ENCODE measurements at regions of chr5 and their contacts with region 1.

Region 1: GRCh38 chr5:16784843-16785791 is 151.0 kb downstream of the MYO10 start:
- DNase-seq: no peak
- ATAC-seq: no peak
- H3K4me3 ChIP-seq: no peak overlapping the region
- H3K27ac ChIP-seq: no peak overlapping the region
- H3K4me1 ChIP-seq: peaks cover 0 to 17% (median 7%) of the 10 kb centered on the region in 3 donors
- H3K27me3 ChIP-seq: no peaks in the 10 kb centered on the region
- CTCF ChIP-seq: no peak

Region 2: GRCh38 chr5:16612007-16612406 is 173.1 kb before region 1 on chr5:
- intact Hi-C with region 1: no loop called
- DNase-seq: no peak
- ATAC-seq: no peak
- H3K4me3 ChIP-seq: no peak overlapping the region
- H3K27ac ChIP-seq: no peak overlapping the region
- H3K4me1 ChIP-seq: no peaks in the 10 kb centered on the region
- H3K27me3 ChIP-seq: no peaks in the 10 kb centered on the region
- CTCF ChIP-seq: no peak

Region 3: DNA sequence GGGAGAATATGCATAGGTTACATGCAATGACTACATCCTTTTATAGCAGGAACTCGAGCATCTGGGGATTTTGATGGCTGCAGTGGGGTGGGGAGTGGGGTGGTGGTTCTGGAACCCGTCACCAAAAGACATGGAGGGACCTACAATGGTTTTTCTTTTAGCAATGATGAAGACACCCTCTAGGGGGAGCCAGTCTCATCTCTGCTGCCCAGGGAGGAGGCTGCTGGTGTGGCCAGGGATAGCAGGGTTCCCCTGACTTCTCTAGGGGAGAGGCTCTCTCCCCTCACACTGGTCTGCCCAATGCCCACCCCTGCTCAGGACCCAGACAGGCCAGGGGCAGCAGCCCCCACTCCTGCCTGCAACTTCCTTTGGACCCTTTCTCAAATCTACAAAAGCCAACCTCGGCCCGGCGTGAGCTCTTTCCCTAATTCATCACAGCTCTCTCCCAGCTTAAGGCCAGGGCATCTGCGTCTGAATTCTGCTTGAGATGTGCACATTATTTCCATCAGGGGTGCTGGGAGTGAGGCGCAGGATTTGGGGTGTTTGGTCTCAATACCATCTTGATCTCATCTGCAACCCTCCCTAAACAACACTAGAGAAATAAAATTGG is 94.8 kb before region 1 on chr5:
- intact Hi-C with region 1: loop called in 1 of 3 experiments (anchors 10 kb)
- DNase-seq: peak in 2 of 6 donors; percentile 13 to 38
- ATAC-seq: peak; percentile 55 to 96 (median 86)
- H3K4me3 ChIP-seq: no peak overlapping the region
- H3K27ac ChIP-seq: no peak overlapping the region
- H3K4me1 ChIP-seq: no peaks in the 10 kb centered on the region
- H3K27me3 ChIP-seq: no peaks in the 10 kb centered on the region
- CTCF ChIP-seq: peak; percentile 27 to 60 (median 51)

Region 4: GRCh38 chr5:16736158-16736995 is 48.7 kb before region 1 on chr5:
- intact Hi-C with region 1: no loop called
- DNase-seq: peak in 4 of 6 donors; percentile 56 to 83 (median 68)
- ATAC-seq: peak; percentile 82 to 90 (median 88)
- H3K4me3 ChIP-seq: no peak overlapping the region
- H3K27ac ChIP-seq: peak overlapping the region; percentile 18 to 74 (median 69)
- H3K4me1 ChIP-seq: peaks cover 12 to 24% (median 20%) of the 10 kb centered on the region in 3 donors
- H3K27me3 ChIP-seq: no peaks in the 10 kb centered on the region
- CTCF ChIP-seq: no peak

Region 5: GRCh38 chr5:17132444-17133083 is 347.4 kb after region 1 on chr5:
- intact Hi-C with region 1: loop called in 1 of 3 experiments (anchors 5 kb)
- DNase-seq: no peak
- ATAC-seq: peak in 3 of 4 donors; percentile 60 to 69 (median 65)
- H3K4me3 ChIP-seq: no peak overlapping the region
- H3K27ac ChIP-seq: no peak overlapping the region
- H3K4me1 ChIP-seq: no peaks in the 10 kb centered on the region
- H3K27me3 ChIP-seq: no peaks in the 10 kb centered on the region
- CTCF ChIP-seq: peak; percentile 26 to 68 (median 53)

Region 6: DNA sequence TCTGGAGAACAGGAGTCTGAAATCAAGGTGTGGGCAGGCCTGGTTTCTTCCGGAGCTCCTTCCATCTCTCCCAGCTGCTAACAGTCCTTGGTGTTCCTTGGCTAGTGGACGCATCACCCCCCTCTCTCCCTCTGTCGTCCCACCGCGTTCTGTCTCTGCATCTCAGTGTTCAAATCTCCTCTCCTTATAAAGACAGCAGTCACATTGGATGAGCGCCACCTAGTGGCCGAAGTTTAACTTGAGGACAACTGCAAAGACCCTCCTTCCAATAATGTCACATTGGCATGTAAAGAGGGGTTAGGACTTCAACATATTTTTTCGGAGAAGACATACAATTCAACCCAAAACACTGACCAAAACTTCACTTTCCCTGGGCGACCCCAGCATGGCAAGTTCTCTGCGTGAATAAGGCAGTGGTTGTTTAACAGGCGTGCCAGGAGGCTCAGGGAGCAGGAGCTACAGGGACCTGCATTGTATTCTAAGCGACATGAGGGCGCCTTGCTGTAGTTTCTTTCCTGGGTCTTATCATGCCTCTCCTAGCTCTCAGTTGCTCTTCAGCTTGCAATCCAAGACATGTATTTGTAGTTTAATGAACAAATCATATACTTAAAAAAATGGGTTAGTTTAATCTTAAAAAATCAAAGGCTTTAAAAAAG is 404.4 kb after region 1 on chr5:
- intact Hi-C with region 1: loop called in 1 of 3 experiments (anchors 5 kb)
- DNase-seq: peak; percentile 36 to 91 (median 72)
- ATAC-seq: peak; percentile 71 to 83 (median 82)
- H3K4me3 ChIP-seq: no peak overlapping the region
- H3K27ac ChIP-seq: no peak overlapping the region
- H3K4me1 ChIP-seq: peaks cover 0 to 6% (median 0%) of the 10 kb centered on the region in 3 donors
- H3K27me3 ChIP-seq: no peaks in the 10 kb centered on the region
- CTCF ChIP-seq: peak; percentile 70 to 85 (median 82)